ENCODE measurements at regions of chr7 and their contacts with region 1.

Region 1: DNA sequence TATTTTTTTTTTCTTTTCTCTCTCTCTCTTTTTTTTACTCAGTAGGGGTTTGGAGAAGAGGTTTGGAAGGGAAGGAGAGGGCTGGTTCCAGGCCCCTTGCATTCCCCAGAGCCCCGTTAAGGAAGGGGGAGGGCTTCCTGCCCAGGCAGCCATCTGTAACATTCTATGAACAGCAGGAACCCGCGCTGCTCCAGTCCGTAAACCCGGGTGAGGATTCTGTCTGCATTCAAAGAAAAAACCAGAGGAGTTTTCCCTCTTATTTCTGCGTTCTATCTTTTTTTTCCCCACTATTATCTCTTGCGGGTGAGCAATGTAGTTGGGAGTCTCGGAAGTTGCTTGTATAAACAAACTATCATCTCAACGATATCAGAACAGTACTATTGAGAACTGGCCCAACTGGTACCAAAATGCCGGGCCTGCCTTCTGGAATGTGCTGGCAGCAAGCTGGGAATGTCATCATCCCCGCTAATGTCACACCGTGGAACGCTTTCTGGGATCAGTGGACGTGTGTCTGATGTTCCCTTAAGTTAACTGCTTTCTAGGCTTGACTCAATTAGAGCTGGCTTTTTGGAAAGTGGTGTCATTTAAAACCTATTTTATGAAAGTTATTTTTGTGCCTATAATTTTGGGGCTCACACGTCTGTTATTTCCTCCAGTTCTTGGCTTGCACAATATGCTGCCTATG is 153.1 kb upstream of the MEOX2 start:
- DNase-seq: peak; percentile 69 to 83
- ATAC-seq: peak; percentile 91 to 99 (median 98)
- H3K4me3 ChIP-seq: peak overlapping the region in 9 of 10 donors; percentile 20 to 55 (median 43)
- H3K27ac ChIP-seq: peak overlapping the region; percentile 46 to 95 (median 80)
- H3K4me1 ChIP-seq: peaks cover 0 to 43% (median 16%) of the 10 kb centered on the region in 9 donors
- H3K27me3 ChIP-seq: no peaks in the 10 kb centered on the region
- CTCF ChIP-seq: no peak

Region 2: DNA sequence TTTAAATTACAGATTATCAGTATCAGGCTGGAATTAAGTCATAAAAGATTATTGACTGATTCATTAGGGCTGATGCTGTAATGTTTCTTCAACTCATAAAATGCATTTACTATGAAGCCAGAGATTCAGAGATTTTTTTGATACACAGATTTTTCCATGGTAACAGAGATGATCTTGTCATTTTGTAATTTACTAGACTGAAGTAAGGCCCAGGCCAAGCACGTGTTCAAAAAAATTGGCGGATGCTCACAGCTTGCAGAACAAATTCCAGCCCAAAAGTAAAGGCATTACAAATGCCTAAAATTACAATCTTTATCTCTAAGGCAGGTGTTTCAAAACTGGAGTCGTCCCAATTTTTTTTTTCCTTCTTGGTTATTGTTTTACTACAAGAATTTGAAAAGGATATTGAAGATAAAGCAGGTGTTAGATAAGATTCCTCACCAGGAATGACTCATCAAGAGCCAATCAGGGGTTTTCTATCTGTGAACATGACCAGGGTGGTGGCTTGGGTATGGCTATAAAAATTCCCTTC is 74.6 kb before region 1 on chr7:
- intact Hi-C with region 1: loop called in 3 of 10 experiments (anchors 5 to 10 kb)
- DNase-seq: peak in 1 of 2 donors; percentile 60
- ATAC-seq: peak; percentile 50 to 86 (median 81)
- H3K4me3 ChIP-seq: no peak overlapping the region
- H3K27ac ChIP-seq: peak overlapping the region in 9 of 10 donors; percentile 25 to 84 (median 55)
- H3K4me1 ChIP-seq: peaks cover 0 to 32% (median 14%) of the 10 kb centered on the region in 9 donors
- H3K27me3 ChIP-seq: no peaks in the 10 kb centered on the region
- CTCF ChIP-seq: no peak

Region 3: DNA sequence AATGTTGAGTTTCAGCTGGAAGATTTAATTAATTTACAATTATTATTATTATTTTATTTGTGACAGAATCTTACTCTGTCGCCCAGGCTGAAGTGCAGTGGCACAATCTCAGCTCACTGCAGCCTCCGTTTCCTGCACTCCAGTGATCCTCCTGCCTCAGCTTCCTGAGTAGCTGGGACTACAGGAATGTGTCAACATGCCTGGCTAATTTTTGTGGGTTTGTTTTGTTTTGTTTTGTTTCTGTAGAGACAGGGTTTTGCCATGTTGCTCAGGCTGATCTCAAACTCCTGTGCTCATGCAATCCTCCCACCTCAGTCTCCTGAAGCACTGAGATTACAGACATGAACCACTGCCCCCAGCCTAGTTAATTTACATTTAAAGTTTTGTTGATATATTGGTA is 59.3 kb before region 1 on chr7:
- intact Hi-C with region 1: loop called in 2 of 10 experiments (anchors 10 kb)
- DNase-seq: no peak
- ATAC-seq: peak in 6 of 8 donors; percentile 23 to 73 (median 62)
- H3K4me3 ChIP-seq: no peak overlapping the region
- H3K27ac ChIP-seq: peak overlapping the region in 3 of 10 donors; percentile 2 to 32 (median 4)
- H3K4me1 ChIP-seq: peaks cover 0 to 44% (median 10%) of the 10 kb centered on the region in 9 donors
- H3K27me3 ChIP-seq: no peaks in the 10 kb centered on the region
- CTCF ChIP-seq: no peak

Region 4: GRCh38 chr7:15874774-15875173 is 35.2 kb after region 1 on chr7:
- intact Hi-C with region 1: no loop called
- DNase-seq: no peak
- ATAC-seq: peak in 4 of 8 donors; percentile 41 to 58 (median 50)
- H3K4me3 ChIP-seq: no peak overlapping the region
- H3K27ac ChIP-seq: peak overlapping the region in 3 of 10 donors; percentile 17 to 47 (median 21)
- H3K4me1 ChIP-seq: peaks cover 0 to 12% (median 0%) of the 10 kb centered on the region in 9 donors
- H3K27me3 ChIP-seq: no peaks in the 10 kb centered on the region
- CTCF ChIP-seq: no peak

Region 5: GRCh38 chr7:16055263-16055976 is 215.9 kb after region 1 on chr7:
- intact Hi-C with region 1: loop called in 3 of 10 experiments (anchors 10 kb)
- DNase-seq: no peak
- ATAC-seq: peak in 3 of 8 donors; percentile 16 to 52 (median 31)
- H3K4me3 ChIP-seq: no peak overlapping the region
- H3K27ac ChIP-seq: no peak overlapping the region
- H3K4me1 ChIP-seq: peaks cover 0 to 24% (median 2%) of the 10 kb centered on the region in 9 donors
- H3K27me3 ChIP-seq: no peaks in the 10 kb centered on the region
- CTCF ChIP-seq: no peak